Colonic mucosa (tissue), 4 donors: ENCODE measurements at regions of chr5 and their contacts with region 1.

Region 1: DNA sequence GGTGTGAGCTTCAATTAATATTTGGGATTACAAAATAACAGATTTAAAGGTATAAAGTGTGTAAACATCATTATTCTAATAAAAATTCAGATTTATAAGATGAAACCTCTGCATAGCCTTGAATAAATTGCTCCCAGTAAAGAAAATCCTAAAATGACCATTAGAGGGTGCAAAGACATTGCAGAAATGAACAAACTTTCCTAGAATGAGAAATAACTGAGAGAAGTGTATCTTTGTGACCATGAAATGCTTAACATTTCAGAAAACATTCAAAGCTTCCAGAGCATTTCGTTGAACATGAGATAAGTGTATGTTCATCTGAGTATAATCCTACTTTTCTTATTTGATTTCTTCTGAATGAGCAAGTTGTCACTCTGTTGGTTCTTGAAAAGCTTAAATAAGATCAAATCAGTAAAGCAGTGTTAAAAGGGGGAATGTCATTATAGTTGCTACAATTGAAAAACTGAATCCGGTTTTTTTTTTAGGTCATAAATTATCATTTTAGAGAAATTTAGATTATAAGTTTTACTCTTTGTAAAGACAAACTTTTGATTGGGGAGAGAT is 24.7 kb upstream of the NUDT12 start:
- DNase-seq: no peak
- H3K4me3 ChIP-seq: no peak overlapping the region
- H3K27ac ChIP-seq: no peak overlapping the region
- H3K4me1 ChIP-seq: no peaks in the 10 kb centered on the region
- H3K27me3 ChIP-seq: no peaks in the 10 kb centered on the region
- CTCF ChIP-seq: peak; percentile 24

Region 2: DNA sequence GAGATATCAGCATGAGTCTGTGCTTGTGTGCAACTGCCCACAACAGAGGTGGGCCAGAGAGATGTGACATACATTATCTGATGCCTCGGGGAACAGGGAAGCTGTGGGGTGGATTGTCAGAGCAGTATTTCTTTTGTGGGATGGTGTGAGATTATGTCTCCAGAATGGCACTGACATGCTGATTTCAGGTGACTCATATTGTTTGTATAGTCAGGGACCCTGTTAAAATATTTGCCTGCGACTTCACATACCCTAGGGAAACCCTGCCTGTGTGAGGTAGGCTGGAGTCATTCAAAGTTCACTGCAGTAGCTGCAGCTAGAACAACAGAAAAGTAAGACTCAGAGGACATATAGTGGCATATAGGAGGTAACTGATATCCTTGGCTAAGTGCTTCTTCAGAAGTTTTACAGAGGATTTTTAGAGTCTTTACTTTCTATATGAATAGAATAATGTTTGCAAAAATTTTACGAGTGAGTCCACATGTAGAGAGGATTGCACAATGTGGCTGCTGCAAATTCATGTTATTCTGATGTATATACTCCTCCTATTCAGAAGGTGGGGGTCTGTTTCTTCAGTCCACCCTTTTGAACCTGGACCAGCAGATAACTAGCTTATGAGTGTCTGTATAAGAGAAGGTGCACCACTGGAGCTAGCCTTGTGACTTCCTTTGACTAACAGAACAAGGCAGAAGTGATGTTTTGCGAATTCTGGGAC is 239.4 kb before region 1 on chr5:
- intact Hi-C with region 1: no loop called
- DNase-seq: no peak
- H3K4me3 ChIP-seq: no peak overlapping the region
- H3K27ac ChIP-seq: no peak overlapping the region
- H3K4me1 ChIP-seq: no peaks in the 10 kb centered on the region
- H3K27me3 ChIP-seq: no peaks in the 10 kb centered on the region
- CTCF ChIP-seq: no peak

Region 3: GRCh38 chr5:103487218-103487617 is 100.0 kb before region 1 on chr5:
- intact Hi-C with region 1: no loop called
- DNase-seq: no peak
- H3K4me3 ChIP-seq: no peak overlapping the region
- H3K27ac ChIP-seq: no peak overlapping the region
- H3K4me1 ChIP-seq: no peaks in the 10 kb centered on the region
- H3K27me3 ChIP-seq: no peaks in the 10 kb centered on the region
- CTCF ChIP-seq: no peak

Region 4: DNA sequence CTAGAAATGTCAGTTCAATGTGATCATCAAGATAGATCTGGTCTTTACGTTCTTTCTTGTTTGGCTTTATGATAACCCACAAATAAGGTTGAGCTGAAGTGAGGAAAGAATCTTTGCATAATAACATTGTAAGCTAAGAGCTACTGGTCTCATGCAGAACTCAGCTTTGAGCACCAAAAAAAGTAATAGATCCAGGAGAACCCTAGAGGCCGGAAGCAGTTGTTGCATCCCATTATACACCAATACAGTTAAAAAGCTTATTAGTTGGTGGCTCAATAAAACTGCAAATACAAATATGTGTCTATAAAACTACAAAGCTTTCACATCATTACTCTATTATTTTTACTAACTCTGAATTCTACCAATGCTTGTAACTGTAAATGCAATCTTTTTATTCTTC is 60.8 kb after region 1 on chr5:
- intact Hi-C with region 1: no loop called
- DNase-seq: no peak
- H3K4me3 ChIP-seq: no peak overlapping the region
- H3K27ac ChIP-seq: no peak overlapping the region
- H3K4me1 ChIP-seq: no peaks in the 10 kb centered on the region
- H3K27me3 ChIP-seq: no peaks in the 10 kb centered on the region
- CTCF ChIP-seq: no peak

Region 5: DNA sequence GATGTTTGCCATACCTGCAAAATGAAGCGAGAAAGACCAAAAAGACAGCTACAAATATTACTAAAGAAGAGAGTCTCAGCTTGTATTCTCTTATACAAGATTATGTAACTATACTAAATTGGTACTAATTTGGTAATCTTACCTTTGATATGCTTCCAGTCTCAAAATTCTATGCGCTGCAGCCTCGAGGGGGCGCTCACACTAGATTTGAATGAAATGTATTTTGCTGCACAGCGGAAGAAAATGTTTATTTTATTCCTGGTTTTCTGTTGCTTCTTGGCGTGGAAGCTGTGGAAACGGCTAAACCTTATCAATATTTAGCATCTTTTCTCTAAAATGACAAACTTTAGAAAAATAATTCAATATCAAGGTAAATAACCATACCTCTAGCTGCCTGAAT is 242.3 kb after region 1 on chr5:
- intact Hi-C with region 1: no loop called
- DNase-seq: no peak
- H3K4me3 ChIP-seq: no peak overlapping the region
- H3K27ac ChIP-seq: no peak overlapping the region
- H3K4me1 ChIP-seq: no peaks in the 10 kb centered on the region
- H3K27me3 ChIP-seq: no peaks in the 10 kb centered on the region
- CTCF ChIP-seq: no peak

Region 6: GRCh38 chr5:104178829-104179456 is 591.7 kb after region 1 on chr5:
- intact Hi-C with region 1: loop called (anchors 5 kb)
- DNase-seq: peak; percentile 31
- H3K4me3 ChIP-seq: no peak overlapping the region
- H3K27ac ChIP-seq: no peak overlapping the region
- H3K4me1 ChIP-seq: no peaks in the 10 kb centered on the region
- H3K27me3 ChIP-seq: no peaks in the 10 kb centered on the region
- CTCF ChIP-seq: peak; percentile 40